ENCODE measurements at regions of chr1 and their contacts with region 1.

Region 1: GRCh38 chr1:51690285-51690961 is 73.5 kb downstream of the OSBPL9 start:
- DNase-seq: peak; percentile 87
- ATAC-seq: peak; percentile 80
- H3K4me3 ChIP-seq: peak overlapping the region; percentile 15; the same call in 1 of the 2 replicates
- H3K27ac ChIP-seq: peak overlapping the region; percentile 95
- H3K4me1 ChIP-seq: peaks cover 44% of the 10 kb centered on the region
- H3K27me3 ChIP-seq: no peaks in the 10 kb centered on the region
- CTCF ChIP-seq: no peak

Region 2: DNA sequence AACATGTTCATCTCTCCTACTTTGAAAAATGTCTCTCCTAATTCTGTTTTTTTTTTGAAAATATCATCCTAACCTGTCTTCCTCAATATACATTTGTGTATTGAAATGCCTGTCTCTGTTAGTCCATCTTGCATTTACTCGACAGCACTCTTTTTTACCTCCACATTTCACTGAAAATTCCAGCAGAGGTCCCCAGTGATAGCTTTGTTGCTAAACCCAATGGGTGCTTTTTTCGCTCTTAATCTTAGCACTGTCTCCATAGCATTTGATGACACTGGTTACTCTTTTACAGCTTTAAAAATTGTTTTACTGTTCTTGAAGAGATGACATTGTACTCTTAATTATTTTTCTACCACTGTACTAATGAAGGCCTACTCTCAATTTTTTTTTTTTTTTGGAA is 62.7 kb before region 1 on chr1:
- CTCF ChIA-PET with region 1: no interaction called
- POLR2A ChIA-PET with region 1: no interaction called
- intact Hi-C with region 1: loop called (anchors 5 kb)
- DNase-seq: peak; percentile 59
- ATAC-seq: no peak
- H3K4me3 ChIP-seq: no peak overlapping the region
- H3K27ac ChIP-seq: no peak overlapping the region
- H3K4me1 ChIP-seq: peaks cover 31% of the 10 kb centered on the region
- H3K27me3 ChIP-seq: no peaks in the 10 kb centered on the region
- CTCF ChIP-seq: peak; percentile 65